ENCODE measurements at regions of chrX and their contacts with region 1.

Region 1: GRCh38 chrX:124388562-124388961 is 42.2 kb downstream of the SH2D1A start:
- ATAC-seq: peak in 5 of 8 experiments; percentile 51 to 64 (median 59)
- H3K4me3 ChIP-seq: no peak overlapping the region
- H3K27ac ChIP-seq: no peak overlapping the region
- H3K4me1 ChIP-seq: peaks cover 9 to 11% of the 10 kb centered on the region in 2 donors

Region 2: DNA sequence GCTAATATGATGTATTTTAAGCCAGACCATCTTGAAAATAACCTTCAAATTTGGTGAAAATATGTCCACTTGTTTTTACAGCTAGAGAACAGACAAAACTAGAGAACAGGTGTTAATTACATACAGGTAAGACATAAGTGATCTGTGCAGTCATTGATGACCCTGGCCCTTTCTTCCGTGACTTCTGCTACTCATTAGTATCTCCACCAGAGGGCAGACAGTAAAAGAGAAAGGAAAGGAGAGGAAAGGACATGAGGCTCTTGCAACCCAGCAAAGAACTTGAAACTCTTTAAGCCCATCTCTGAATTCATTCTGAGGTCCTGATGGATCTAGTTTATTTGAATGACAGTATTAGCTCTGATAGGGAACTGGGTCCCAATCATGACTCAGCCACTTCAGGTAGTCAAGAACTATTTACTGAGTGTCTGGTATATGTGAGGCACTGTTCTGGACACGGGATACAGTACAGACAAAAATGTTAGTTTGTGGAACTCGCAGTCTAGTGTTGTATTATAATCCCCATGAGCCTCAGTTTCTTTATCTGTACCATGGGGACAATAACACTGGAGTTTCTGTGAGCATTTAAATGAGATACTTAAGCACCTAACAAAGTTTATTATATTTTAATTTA is 177.1 kb before region 1 on chrX:
- in situ Hi-C with region 1: loop called in 1 of 9 experiments (anchors 25 kb)
- ATAC-seq: peak in 3 of 8 experiments; percentile 56 to 75 (median 67)
- H3K4me3 ChIP-seq: no peak overlapping the region
- H3K27ac ChIP-seq: no peak overlapping the region
- H3K4me1 ChIP-seq: no peaks in the 10 kb centered on the region

Region 3: GRCh38 chrX:124476562-124476961 is 88.0 kb after region 1 on chrX:
- in situ Hi-C with region 1: no loop called
- ATAC-seq: no peak
- H3K4me3 ChIP-seq: no peak overlapping the region
- H3K27ac ChIP-seq: no peak overlapping the region
- H3K4me1 ChIP-seq: no peaks in the 10 kb centered on the region

Region 4: GRCh38 chrX:125622899-125623298 is 1234.3 kb after region 1 on chrX:
- in situ Hi-C with region 1: no loop called
- ATAC-seq: peak in 1 of 8 experiments; percentile 82
- H3K4me3 ChIP-seq: no peak overlapping the region
- H3K27ac ChIP-seq: no peak overlapping the region
- H3K4me1 ChIP-seq: no peaks in the 10 kb centered on the region

Measured in motor neuron (in vitro differentiated cells).